Naive thymus-derived CD4-positive, alpha-beta T cell (primary cell): ENCODE measurements at regions of chr12 and their contacts with region 1.

Region 1: DNA sequence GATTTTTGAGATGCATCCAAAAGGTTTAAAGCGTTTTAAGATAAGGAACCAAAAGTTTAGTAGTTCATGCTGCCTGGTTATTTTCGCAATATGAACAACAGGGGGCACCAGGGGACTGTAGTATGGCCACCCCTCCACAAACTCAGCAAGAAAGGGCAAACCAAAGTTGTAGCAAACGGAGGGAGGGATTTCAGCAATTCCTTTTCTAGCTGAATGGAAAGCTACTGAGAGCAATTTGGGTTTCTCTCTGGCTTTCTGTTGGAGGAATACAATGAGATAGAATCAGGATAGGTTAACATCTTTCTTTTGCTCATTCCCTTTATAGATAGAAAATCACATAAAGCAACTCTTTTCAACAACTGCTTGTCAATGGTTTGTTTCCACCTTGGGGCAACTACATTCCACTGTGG is 62.5 kb downstream of the DRAM1 start:
- DNase-seq: peak in 8 of 9 donors; percentile 34 to 69 (median 56)
- ATAC-seq: peak; percentile 70
- H3K4me3 ChIP-seq: no peak overlapping the region
- H3K4me3 Mint-ChIP-seq: no peak overlapping the region
- H3K27ac ChIP-seq: no peak overlapping the region
- H3K27ac Mint-ChIP-seq: peak overlapping the region in 1 of 9 donors; percentile 32
- H3K4me1 ChIP-seq: no peaks in the 10 kb centered on the region
- H3K4me1 Mint-ChIP-seq: peaks cover 0 to 34% (median 0%) of the 10 kb centered on the region in 7 donors
- H3K27me3 ChIP-seq: no peaks in the 10 kb centered on the region
- H3K27me3 Mint-ChIP-seq: peaks cover 15 to 21% (median 19%) of the 10 kb centered on the region in 5 donors

Region 2: GRCh38 chr12:101919447-101919846 is 20.4 kb before region 1 on chr12:
- CTCF ChIA-PET with region 1: no interaction called
- POLR2A ChIA-PET with region 1: no interaction called
- intact Hi-C with region 1: loop called in 1 of 2 experiments (anchors 2 kb)
- DNase-seq: no peak
- ATAC-seq: no peak
- H3K4me3 ChIP-seq: no peak overlapping the region
- H3K4me3 Mint-ChIP-seq: no peak overlapping the region
- H3K27ac ChIP-seq: no peak overlapping the region
- H3K27ac Mint-ChIP-seq: no peak overlapping the region
- H3K4me1 ChIP-seq: no peaks in the 10 kb centered on the region
- H3K4me1 Mint-ChIP-seq: peaks cover 0 to 13% (median 3%) of the 10 kb centered on the region in 7 donors
- H3K27me3 ChIP-seq: no peaks in the 10 kb centered on the region
- H3K27me3 Mint-ChIP-seq: peaks cover 0 to 5% (median 0%) of the 10 kb centered on the region in 5 donors

Region 3: DNA sequence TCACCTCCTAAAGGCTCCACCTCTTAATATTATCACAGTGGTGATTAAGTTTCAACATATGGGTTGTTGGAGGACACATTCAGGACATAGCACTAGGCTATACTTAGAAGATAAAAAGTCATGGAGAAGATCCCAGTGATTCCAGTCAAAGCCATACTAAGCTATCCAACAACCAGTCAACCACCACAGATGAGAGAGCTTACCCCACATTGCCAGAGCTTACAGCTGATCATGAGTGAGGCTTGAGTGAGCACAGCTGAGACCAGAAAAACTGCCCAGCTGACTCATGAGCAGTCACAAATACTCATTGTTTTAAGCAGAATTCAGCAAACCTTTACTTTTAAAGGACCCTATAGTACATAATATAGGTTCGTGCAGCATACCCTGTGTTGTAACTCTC is 22.6 kb after region 1 on chr12:
- CTCF ChIA-PET with region 1: no interaction called
- POLR2A ChIA-PET with region 1: no interaction called
- intact Hi-C with region 1: no loop called
- DNase-seq: no peak
- ATAC-seq: no peak
- H3K4me3 ChIP-seq: no peak overlapping the region
- H3K4me3 Mint-ChIP-seq: no peak overlapping the region
- H3K27ac ChIP-seq: no peak overlapping the region
- H3K27ac Mint-ChIP-seq: no peak overlapping the region
- H3K4me1 ChIP-seq: peaks cover 3 to 5% of the 10 kb centered on the region in 2 donors
- H3K4me1 Mint-ChIP-seq: peaks cover 0 to 4% (median 2%) of the 10 kb centered on the region in 7 donors
- H3K27me3 ChIP-seq: no peaks in the 10 kb centered on the region
- H3K27me3 Mint-ChIP-seq: peaks cover 0 to 4% (median 0%) of the 10 kb centered on the region in 5 donors

Region 4: GRCh38 chr12:102095675-102096263 is 155.9 kb after region 1 on chr12:
- CTCF ChIA-PET with region 1: no interaction called
- POLR2A ChIA-PET with region 1: no interaction called
- intact Hi-C with region 1: loop called in 1 of 2 experiments (anchors 10 kb)
- DNase-seq: no peak
- ATAC-seq: peak; percentile 56
- H3K4me3 ChIP-seq: no peak overlapping the region
- H3K4me3 Mint-ChIP-seq: no peak overlapping the region
- H3K27ac ChIP-seq: no peak overlapping the region
- H3K27ac Mint-ChIP-seq: no peak overlapping the region
- H3K4me1 ChIP-seq: no peaks in the 10 kb centered on the region
- H3K4me1 Mint-ChIP-seq: peaks cover 0 to 5% (median 3%) of the 10 kb centered on the region in 7 donors
- H3K27me3 ChIP-seq: no peaks in the 10 kb centered on the region
- H3K27me3 Mint-ChIP-seq: no peaks in the 10 kb centered on the region

Region 5: GRCh38 chr12:102169922-102170621 is 230.2 kb after region 1 on chr12:
- CTCF ChIA-PET with region 1: no interaction called
- POLR2A ChIA-PET with region 1: no interaction called
- intact Hi-C with region 1: loop called in 1 of 2 experiments (anchors 5 kb)
- DNase-seq: peak in 2 of 9 donors; percentile 2 to 5
- ATAC-seq: peak; percentile 54
- H3K4me3 ChIP-seq: no peak overlapping the region
- H3K4me3 Mint-ChIP-seq: no peak overlapping the region
- H3K27ac ChIP-seq: no peak overlapping the region
- H3K27ac Mint-ChIP-seq: no peak overlapping the region
- H3K4me1 ChIP-seq: no peaks in the 10 kb centered on the region
- H3K4me1 Mint-ChIP-seq: peaks cover 0 to 17% (median 0%) of the 10 kb centered on the region in 7 donors
- H3K27me3 ChIP-seq: no peaks in the 10 kb centered on the region
- H3K27me3 Mint-ChIP-seq: no peaks in the 10 kb centered on the region

Region 6: DNA sequence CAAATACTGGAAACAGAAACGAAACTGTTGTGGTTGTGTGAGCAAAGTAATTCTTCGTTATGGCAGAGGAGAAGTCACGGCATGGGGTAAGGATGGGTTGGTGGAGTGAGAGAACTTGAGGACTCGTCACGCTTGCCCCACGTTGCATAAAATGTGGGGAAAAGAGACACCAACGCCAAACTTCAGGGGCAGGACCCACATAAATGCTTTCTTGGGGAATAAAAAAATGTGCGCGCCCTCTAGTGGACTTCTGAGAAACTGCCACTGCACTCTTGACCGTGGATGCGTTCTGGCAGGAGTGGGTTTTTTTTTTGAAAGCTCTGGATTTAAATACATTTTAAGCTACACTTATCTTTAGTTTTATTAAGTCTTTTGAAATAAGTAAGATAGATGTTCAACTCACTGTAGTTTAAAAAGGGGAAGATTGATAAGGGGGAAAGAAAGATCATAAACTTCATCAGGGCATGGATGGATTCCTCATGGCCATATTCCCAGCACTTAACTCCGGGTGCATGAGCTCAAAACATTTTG is 544.6 kb after region 1 on chr12:
- CTCF ChIA-PET with region 1: interaction called, 5 read pairs
- POLR2A ChIA-PET with region 1: no interaction called
- intact Hi-C with region 1: loop called (anchors 1 kb)
- DNase-seq: peak in 8 of 9 donors; percentile 11 to 58 (median 34)
- ATAC-seq: peak; percentile 55
- H3K4me3 ChIP-seq: peak overlapping the region; percentile 25
- H3K4me3 Mint-ChIP-seq: peak overlapping the region; percentile 30 to 82 (median 70)
- H3K27ac ChIP-seq: no peak overlapping the region
- H3K27ac Mint-ChIP-seq: peak overlapping the region in 1 of 9 donors; percentile 89
- H3K4me1 ChIP-seq: peaks cover under 1 to 5% of the 10 kb centered on the region in 2 donors
- H3K4me1 Mint-ChIP-seq: peaks cover 0 to 35% (median 7%) of the 10 kb centered on the region in 7 donors
- H3K27me3 ChIP-seq: no peaks in the 10 kb centered on the region
- H3K27me3 Mint-ChIP-seq: peaks cover 0 to 19% (median 9%) of the 10 kb centered on the region in 5 donors

Region 7: GRCh38 chr12:102702447-102703114 is 762.7 kb after region 1 on chr12:
- CTCF ChIA-PET with region 1: no interaction called
- POLR2A ChIA-PET with region 1: no interaction called
- intact Hi-C with region 1: loop called in 1 of 2 experiments (anchors 1 kb)
- DNase-seq: peak in 2 of 9 donors; percentile 1 to 37
- ATAC-seq: no peak
- H3K4me3 ChIP-seq: no peak overlapping the region
- H3K4me3 Mint-ChIP-seq: no peak overlapping the region
- H3K27ac ChIP-seq: no peak overlapping the region
- H3K27ac Mint-ChIP-seq: no peak overlapping the region
- H3K4me1 ChIP-seq: no peaks in the 10 kb centered on the region
- H3K4me1 Mint-ChIP-seq: no peaks in the 10 kb centered on the region
- H3K27me3 ChIP-seq: no peaks in the 10 kb centered on the region
- H3K27me3 Mint-ChIP-seq: peaks cover 8 to 31% (median 8%) of the 10 kb centered on the region in 5 donors

Region 8: GRCh38 chr12:102811110-102811737 is 871.4 kb after region 1 on chr12:
- CTCF ChIA-PET with region 1: no interaction called
- POLR2A ChIA-PET with region 1: no interaction called
- intact Hi-C with region 1: loop called in 1 of 2 experiments (anchors 2 kb)
- DNase-seq: no peak
- ATAC-seq: no peak
- H3K4me3 ChIP-seq: no peak overlapping the region
- H3K4me3 Mint-ChIP-seq: no peak overlapping the region
- H3K27ac ChIP-seq: no peak overlapping the region
- H3K27ac Mint-ChIP-seq: no peak overlapping the region
- H3K4me1 ChIP-seq: no peaks in the 10 kb centered on the region
- H3K4me1 Mint-ChIP-seq: no peaks in the 10 kb centered on the region
- H3K27me3 ChIP-seq: no peaks in the 10 kb centered on the region
- H3K27me3 Mint-ChIP-seq: peaks cover 0 to 16% (median 9%) of the 10 kb centered on the region in 5 donors